ENCODE measurements at regions of chr10 and their contacts with region 1.

Region 1: GRCh38 chr10:5434017-5434753 is 21.8 kb downstream of the NET1 start:
- DNase-seq: peak in 1 of 2 donors; percentile 72
- H3K4me3 ChIP-seq: no peak overlapping the region
- H3K27ac ChIP-seq: peak overlapping the region; percentile 12 to 57 (median 40)
- H3K4me1 ChIP-seq: peaks cover 4 to 51% (median 25%) of the 10 kb centered on the region in 4 donors
- H3K27me3 ChIP-seq: no peaks in the 10 kb centered on the region
- CTCF ChIP-seq: peak in 5 of 7 experiments; percentile 42 to 74 (median 65)
- EP300 ChIP-seq: no peak
- POLR2A ChIP-seq: no peak

Region 2: GRCh38 chr10:5293691-5294550 is 140.3 kb before region 1 on chr10:
- intact Hi-C with region 1: no loop called
- DNase-seq: peak; percentile 76
- H3K4me3 ChIP-seq: no peak overlapping the region
- H3K27ac ChIP-seq: peak overlapping the region in 2 of 5 donors; percentile 33 to 46
- H3K4me1 ChIP-seq: peaks cover 0 to 21% (median 3%) of the 10 kb centered on the region in 4 donors
- H3K27me3 ChIP-seq: no peaks in the 10 kb centered on the region
- CTCF ChIP-seq: peak in 4 of 7 experiments; percentile 15 to 29 (median 26)
- EP300 ChIP-seq: no peak
- POLR2A ChIP-seq: no peak

Region 3: GRCh38 chr10:5862360-5862961 is 428.3 kb after region 1 on chr10:
- intact Hi-C with region 1: loop called (anchors 10 kb)
- DNase-seq: no peak
- H3K4me3 ChIP-seq: no peak overlapping the region
- H3K27ac ChIP-seq: no peak overlapping the region
- H3K4me1 ChIP-seq: peaks cover 0 to 15% (median 0%) of the 10 kb centered on the region in 4 donors
- H3K27me3 ChIP-seq: no peaks in the 10 kb centered on the region
- CTCF ChIP-seq: no peak
- EP300 ChIP-seq: no peak
- POLR2A ChIP-seq: no peak

Measured in stomach (tissue), 19 donors.